Gastrocnemius medialis (tissue), 4 donors: ENCODE measurements at regions of chr4 and their contacts with region 1.

Region 1: GRCh38 chr4:113404841-113405240 is 355.4 kb downstream of the ANK2 start:
- DNase-seq: no peak
- ATAC-seq: no peak
- H3K4me3 ChIP-seq: no peak overlapping the region
- H3K27ac ChIP-seq: no peak overlapping the region
- H3K4me1 ChIP-seq: peaks cover 0 to 13% of the 10 kb centered on the region in 2 donors
- H3K27me3 ChIP-seq: no peaks in the 10 kb centered on the region
- CTCF ChIP-seq: no peak
- POLR2A ChIP-seq: no peak

Region 2: DNA sequence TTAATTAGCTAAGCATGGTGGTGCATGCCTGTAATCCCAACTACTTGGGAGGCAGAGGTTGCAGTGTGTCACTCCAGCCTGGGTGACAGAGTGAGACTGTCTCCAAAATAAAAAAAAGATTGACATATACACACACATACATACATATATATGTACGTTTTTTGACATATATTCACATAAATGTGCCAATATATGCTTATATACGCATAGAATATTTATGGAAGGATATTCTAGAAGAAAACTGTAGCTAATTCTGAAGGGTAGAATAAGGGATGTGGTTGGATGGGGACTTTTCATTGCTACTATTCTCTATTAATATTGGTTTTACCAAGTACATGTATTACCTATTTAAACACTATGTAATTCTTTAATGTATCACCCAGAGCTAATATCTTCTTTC is 787.9 kb before region 1 on chr4:
- in situ Hi-C with region 1: no loop called
- intact Hi-C with region 1: no loop called
- DNase-seq: no peak
- ATAC-seq: no peak
- H3K4me3 ChIP-seq: no peak overlapping the region
- H3K27ac ChIP-seq: no peak overlapping the region
- H3K4me1 ChIP-seq: no peaks in the 10 kb centered on the region
- H3K27me3 ChIP-seq: no peaks in the 10 kb centered on the region
- CTCF ChIP-seq: no peak
- POLR2A ChIP-seq: no peak

Region 3: GRCh38 chr4:113773014-113773413 is 368.2 kb after region 1 on chr4:
- in situ Hi-C with region 1: loop called in 2 of 4 experiments (anchors 10 kb)
- intact Hi-C with region 1: no loop called
- DNase-seq: no peak
- ATAC-seq: no peak
- H3K4me3 ChIP-seq: no peak overlapping the region
- H3K27ac ChIP-seq: no peak overlapping the region
- H3K4me1 ChIP-seq: no peaks in the 10 kb centered on the region
- H3K27me3 ChIP-seq: no peaks in the 10 kb centered on the region
- CTCF ChIP-seq: no peak
- POLR2A ChIP-seq: no peak